ENCODE measurements at regions of chr2 and their contacts with region 1.

Region 1: DNA sequence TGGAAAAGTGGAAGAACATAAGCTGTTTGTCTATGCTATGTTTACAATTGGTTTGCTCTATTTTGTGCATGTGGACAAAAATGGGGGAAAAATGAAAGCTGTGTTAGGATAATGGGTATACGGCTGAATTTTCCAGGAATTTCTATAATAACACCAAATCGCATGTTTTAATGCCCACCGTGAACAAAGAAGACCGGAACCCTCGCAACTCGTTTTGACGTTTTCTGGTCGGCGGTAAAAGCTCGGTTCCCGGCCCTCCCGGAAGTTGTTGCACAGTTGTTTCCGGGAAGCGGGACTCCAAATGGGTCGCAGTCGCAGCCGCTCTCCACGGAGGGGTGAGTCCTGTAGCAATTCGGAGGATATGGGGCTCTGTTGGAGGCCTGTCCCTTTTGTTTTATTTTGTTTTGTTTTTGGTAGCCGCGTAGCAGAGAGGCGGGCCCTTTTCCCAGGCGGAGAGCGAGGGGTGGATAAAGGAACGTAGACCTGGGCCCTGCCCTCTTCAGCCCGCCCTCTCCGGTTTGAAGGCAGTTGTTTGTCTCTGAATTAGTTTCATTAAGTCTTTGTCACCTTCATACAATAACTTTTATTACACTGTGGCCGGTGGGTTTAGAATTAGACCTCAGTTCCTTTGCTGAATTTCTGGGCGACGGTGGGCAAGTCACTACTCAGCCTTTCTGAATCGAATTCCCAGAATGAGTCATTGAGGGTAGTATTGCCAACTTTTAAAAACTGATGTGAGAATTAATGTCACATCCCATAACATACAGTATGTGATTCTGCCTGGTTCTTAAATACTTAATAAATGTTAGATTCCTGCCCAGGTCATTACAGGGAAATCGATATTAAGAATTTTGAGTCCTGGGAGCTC is at the start of gene SNRNP27:
- DNase-seq: peak; percentile 67 to 91 (median 77)
- ATAC-seq: peak; percentile 96
- H3K4me3 ChIP-seq: peak within 1 kb of the TSS; percentile 68
- H3K27ac ChIP-seq: peak within 1 kb of the TSS; percentile 79
- H3K4me1 ChIP-seq: peaks cover 3 to 7% of the 10 kb centered on the region in 2 experiments; a peak in 4 of 5 replicates
- H3K27me3 ChIP-seq: no peaks in the 10 kb centered on the region
- CTCF ChIP-seq: no peak
- EP300 ChIP-seq: no peak
- POLR2A ChIP-seq: peak; percentile 90
- RAD21 ChIP-seq: peak in 1 of 2 experiments; percentile 12; a peak in 1 of 4 replicates
- polyA plus RNA-seq, gene SNRNP27: 29.2 to 33.7 TPM

Region 2: GRCh38 chr2:69807821-69808540 is 85.9 kb before region 1 on chr2:
- CTCF ChIA-PET with region 1: no interaction called
- POLR2A ChIA-PET with region 1: no interaction called
- in situ Hi-C with region 1: no loop called
- intact Hi-C with region 1: no loop called
- DNase-seq: no peak
- ATAC-seq: no peak
- H3K4me3 ChIP-seq: no peak overlapping the region
- H3K27ac ChIP-seq: no peak overlapping the region
- H3K4me1 ChIP-seq: peaks cover 0 to 3% of the 10 kb centered on the region in 2 experiments; a peak in 2 of 5 replicates
- H3K27me3 ChIP-seq: no peaks in the 10 kb centered on the region
- CTCF ChIP-seq: no peak
- EP300 ChIP-seq: no peak
- POLR2A ChIP-seq: no peak
- RAD21 ChIP-seq: no peak

Region 3: GRCh38 chr2:69829256-69830046 is 64.5 kb before region 1 on chr2 and contains the start of gene GMCL1:
- CTCF ChIA-PET with region 1: no interaction called
- POLR2A ChIA-PET with region 1: no interaction called
- in situ Hi-C with region 1: no loop called
- intact Hi-C with region 1: loop called (anchors 10 kb)
- DNase-seq: peak; percentile 92 to 98 (median 94)
- ATAC-seq: peak; percentile 91
- H3K4me3 ChIP-seq: peak within 1 kb of the TSS; percentile 75
- H3K27ac ChIP-seq: peak within 1 kb of the TSS; percentile 93
- H3K4me1 ChIP-seq: peaks cover 20 to 26% of the 10 kb centered on the region in 2 experiments
- H3K27me3 ChIP-seq: no peaks in the 10 kb centered on the region
- CTCF ChIP-seq: no peak
- EP300 ChIP-seq: 0 out of 2 replicates have a peak, but pooled peaks have one; percentile 18
- POLR2A ChIP-seq: peak; percentile 95
- RAD21 ChIP-seq: no peak
- polyA plus RNA-seq, gene GMCL1: 7.0 to 8.1 TPM

Region 4: DNA sequence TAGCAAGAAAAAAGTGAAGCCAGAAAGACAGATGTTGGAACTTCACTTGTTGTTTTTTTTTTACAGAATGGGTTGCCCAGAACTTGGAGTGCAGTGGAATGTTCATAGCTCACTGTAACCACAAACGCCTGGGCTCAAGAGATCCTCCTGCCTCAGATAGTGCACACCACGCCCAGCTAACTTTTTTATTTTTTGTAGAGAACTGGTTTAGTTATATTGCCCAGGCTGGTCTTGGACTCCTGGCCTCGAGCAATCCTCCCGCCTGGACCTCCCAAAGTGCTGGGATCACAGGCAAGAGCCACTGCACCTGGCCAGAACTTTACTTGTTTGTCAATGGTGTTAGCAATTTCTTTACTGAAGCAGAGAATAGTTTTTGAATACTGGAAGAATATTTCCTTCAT is 79.4 kb after region 1 on chr2:
- CTCF ChIA-PET with region 1: no interaction called
- POLR2A ChIA-PET with region 1: no interaction called
- in situ Hi-C with region 1: no loop called
- intact Hi-C with region 1: no loop called
- DNase-seq: peak; percentile 58 to 81 (median 59)
- ATAC-seq: peak; percentile 66
- H3K4me3 ChIP-seq: no peak overlapping the region
- H3K27ac ChIP-seq: peak overlapping the region; percentile 35
- H3K4me1 ChIP-seq: peaks cover 58 to 60% of the 10 kb centered on the region in 2 experiments
- H3K27me3 ChIP-seq: no peaks in the 10 kb centered on the region
- CTCF ChIP-seq: no peak
- EP300 ChIP-seq: peak; percentile 63
- POLR2A ChIP-seq: no peak
- RAD21 ChIP-seq: 0 out of 4 replicates have a peak, but pooled peaks of 1 of the 2 experiments have one; percentile 10